ENCODE measurements at regions of chr6 and their contacts with region 1.

Region 1: DNA sequence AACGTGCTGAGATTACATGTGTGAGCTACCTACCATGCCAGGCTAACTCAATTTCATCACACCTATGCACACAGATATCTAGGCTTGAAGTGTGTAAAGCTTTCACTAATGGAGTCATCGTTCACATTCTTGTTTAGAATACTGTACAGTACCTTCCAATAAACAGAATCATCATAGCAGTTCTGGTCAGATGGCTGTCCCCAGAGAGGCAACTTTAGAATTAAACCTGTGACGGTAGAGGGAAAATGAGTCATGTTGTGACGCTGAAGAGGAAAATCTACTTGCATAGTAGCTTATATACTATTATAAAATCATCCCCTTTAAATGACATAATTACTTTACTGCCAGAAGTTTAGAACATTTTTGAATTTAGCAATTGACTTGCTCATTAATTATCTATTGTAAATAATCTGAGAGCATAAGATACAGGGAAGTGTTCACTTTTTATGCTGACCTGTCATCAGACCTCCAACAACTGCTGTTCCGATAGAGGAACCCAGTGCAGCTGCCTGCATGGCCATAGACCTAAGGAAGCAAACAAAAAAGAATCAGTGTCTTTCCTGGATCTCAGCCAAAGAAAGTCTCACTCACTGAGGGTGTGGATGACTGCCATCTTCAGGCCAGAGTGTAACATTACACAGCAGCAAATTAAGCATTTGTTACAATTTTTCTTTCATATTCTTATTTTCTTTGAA is 29.8 kb downstream of the RHAG start:
- DNase-seq: peak in 4 of 6 donors; percentile 12 to 41 (median 22)
- ATAC-seq: peak; percentile 76 to 97 (median 94)
- H3K4me3 ChIP-seq: no peak overlapping the region
- H3K27ac ChIP-seq: no peak overlapping the region
- H3K4me1 ChIP-seq: no peaks in the 10 kb centered on the region
- H3K27me3 ChIP-seq: peaks cover 0 to 3% (median 0%) of the 10 kb centered on the region in 4 donors
- CTCF ChIP-seq: peak; percentile 68 to 81 (median 76)

Region 2: GRCh38 chr6:49531774-49532569 is 74.9 kb before region 1 on chr6:
- intact Hi-C with region 1: loop called in 2 of 3 experiments (anchors 5 to 10 kb)
- DNase-seq: no peak
- ATAC-seq: peak; percentile 92 to 99 (median 96)
- H3K4me3 ChIP-seq: peak overlapping the region in 1 of 4 donors; percentile 21
- H3K27ac ChIP-seq: no peak overlapping the region
- H3K4me1 ChIP-seq: no peaks in the 10 kb centered on the region
- H3K27me3 ChIP-seq: no peaks in the 10 kb centered on the region
- CTCF ChIP-seq: peak; percentile 20 to 61 (median 58)

Measured in pancreas (tissue), 10 donors.